ENCODE measurements at regions of chr10 and their contacts with region 1.

Region 1: DNA sequence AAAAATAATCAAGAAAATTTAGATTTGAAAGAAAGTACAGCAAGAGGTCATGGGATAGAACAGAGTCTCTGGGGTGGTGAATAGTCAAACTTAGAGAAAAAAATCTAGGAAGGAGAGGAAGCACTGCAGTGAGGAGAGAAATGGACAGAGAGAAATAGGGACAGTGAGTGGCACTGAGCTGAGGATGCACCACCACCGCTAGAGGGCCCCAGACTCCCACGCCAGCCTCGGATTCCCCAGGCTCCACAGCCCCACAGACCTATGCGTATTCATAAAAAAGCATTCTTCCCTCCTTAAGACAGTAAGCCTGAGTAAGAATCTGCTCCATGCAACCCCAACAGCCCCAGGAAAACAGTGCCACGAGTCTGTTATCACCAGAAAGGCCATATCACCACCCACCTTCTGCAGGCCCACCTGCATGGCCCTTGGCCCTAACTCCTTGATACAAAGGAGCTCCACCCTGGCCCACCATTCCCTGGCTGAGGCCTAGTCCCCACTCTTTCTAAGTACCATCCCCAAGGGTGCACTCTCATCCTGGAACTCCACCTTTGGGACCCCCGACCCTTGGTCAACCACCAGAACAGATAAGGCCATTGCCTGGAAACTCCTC is 91.0 kb downstream of the ALOX5 start:
- DNase-seq: peak; percentile 73 to 86
- ATAC-seq: peak; percentile 92 to 99 (median 99)
- H3K4me3 ChIP-seq: no peak overlapping the region
- H3K4me3 Mint-ChIP-seq: no peak overlapping the region
- H3K27ac ChIP-seq: no peak overlapping the region
- H3K27ac Mint-ChIP-seq: peak overlapping the region in 1 of 2 donors; percentile 47
- H3K4me1 ChIP-seq: peaks cover 15% of the 10 kb centered on the region
- H3K4me1 Mint-ChIP-seq: peaks cover 16% of the 10 kb centered on the region in 2 donors
- H3K27me3 ChIP-seq: no peaks in the 10 kb centered on the region
- H3K27me3 Mint-ChIP-seq: no peaks in the 10 kb centered on the region
- CTCF ChIP-seq: peak; percentile 91

Region 2: GRCh38 chr10:45453639-45454255 is 11.3 kb before region 1 on chr10:
- intact Hi-C with region 1: no loop called
- DNase-seq: no peak
- ATAC-seq: no peak
- H3K4me3 ChIP-seq: no peak overlapping the region
- H3K4me3 Mint-ChIP-seq: no peak overlapping the region
- H3K27ac ChIP-seq: no peak overlapping the region
- H3K27ac Mint-ChIP-seq: no peak overlapping the region
- H3K4me1 ChIP-seq: no peaks in the 10 kb centered on the region
- H3K4me1 Mint-ChIP-seq: peaks cover 0 to 8% of the 10 kb centered on the region in 2 donors
- H3K27me3 ChIP-seq: no peaks in the 10 kb centered on the region
- H3K27me3 Mint-ChIP-seq: no peaks in the 10 kb centered on the region
- CTCF ChIP-seq: no peak

Region 3: GRCh38 chr10:45513551-45513950 is 48.5 kb after region 1 on chr10:
- intact Hi-C with region 1: no loop called
- DNase-seq: no peak
- ATAC-seq: no peak
- H3K4me3 ChIP-seq: no peak overlapping the region
- H3K4me3 Mint-ChIP-seq: no peak overlapping the region
- H3K27ac ChIP-seq: no peak overlapping the region
- H3K27ac Mint-ChIP-seq: no peak overlapping the region
- H3K4me1 ChIP-seq: no peaks in the 10 kb centered on the region
- H3K4me1 Mint-ChIP-seq: peaks cover 30 to 40% of the 10 kb centered on the region in 2 donors
- H3K27me3 ChIP-seq: no peaks in the 10 kb centered on the region
- H3K27me3 Mint-ChIP-seq: no peaks in the 10 kb centered on the region
- CTCF ChIP-seq: no peak

Region 4: DNA sequence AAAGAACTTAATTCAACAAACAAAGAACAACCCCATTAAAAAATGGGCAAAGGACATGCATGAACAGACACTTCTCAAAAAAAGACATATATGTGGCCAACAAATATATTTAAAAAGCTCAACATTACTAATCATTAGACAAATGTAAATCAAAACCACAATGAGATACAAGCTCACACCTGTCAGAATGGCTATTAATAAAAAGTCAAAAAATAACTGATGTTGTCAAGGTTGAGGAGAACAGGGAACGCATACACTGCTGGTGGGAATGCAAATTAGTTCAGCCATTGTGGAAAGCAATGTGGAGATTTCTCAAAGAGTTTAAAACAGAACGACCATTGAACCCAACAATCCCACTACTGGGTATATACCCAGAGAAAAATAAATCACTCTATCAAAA is 188.4 kb after region 1 on chr10:
- intact Hi-C with region 1: no loop called
- DNase-seq: no peak
- ATAC-seq: no peak
- H3K4me3 ChIP-seq: no peak overlapping the region
- H3K4me3 Mint-ChIP-seq: no peak overlapping the region
- H3K27ac ChIP-seq: no peak overlapping the region
- H3K27ac Mint-ChIP-seq: no peak overlapping the region
- H3K4me1 ChIP-seq: no peaks in the 10 kb centered on the region
- H3K4me1 Mint-ChIP-seq: peaks cover 24 to 36% of the 10 kb centered on the region in 2 donors
- H3K27me3 ChIP-seq: no peaks in the 10 kb centered on the region
- H3K27me3 Mint-ChIP-seq: no peaks in the 10 kb centered on the region
- CTCF ChIP-seq: no peak

Region 5: DNA sequence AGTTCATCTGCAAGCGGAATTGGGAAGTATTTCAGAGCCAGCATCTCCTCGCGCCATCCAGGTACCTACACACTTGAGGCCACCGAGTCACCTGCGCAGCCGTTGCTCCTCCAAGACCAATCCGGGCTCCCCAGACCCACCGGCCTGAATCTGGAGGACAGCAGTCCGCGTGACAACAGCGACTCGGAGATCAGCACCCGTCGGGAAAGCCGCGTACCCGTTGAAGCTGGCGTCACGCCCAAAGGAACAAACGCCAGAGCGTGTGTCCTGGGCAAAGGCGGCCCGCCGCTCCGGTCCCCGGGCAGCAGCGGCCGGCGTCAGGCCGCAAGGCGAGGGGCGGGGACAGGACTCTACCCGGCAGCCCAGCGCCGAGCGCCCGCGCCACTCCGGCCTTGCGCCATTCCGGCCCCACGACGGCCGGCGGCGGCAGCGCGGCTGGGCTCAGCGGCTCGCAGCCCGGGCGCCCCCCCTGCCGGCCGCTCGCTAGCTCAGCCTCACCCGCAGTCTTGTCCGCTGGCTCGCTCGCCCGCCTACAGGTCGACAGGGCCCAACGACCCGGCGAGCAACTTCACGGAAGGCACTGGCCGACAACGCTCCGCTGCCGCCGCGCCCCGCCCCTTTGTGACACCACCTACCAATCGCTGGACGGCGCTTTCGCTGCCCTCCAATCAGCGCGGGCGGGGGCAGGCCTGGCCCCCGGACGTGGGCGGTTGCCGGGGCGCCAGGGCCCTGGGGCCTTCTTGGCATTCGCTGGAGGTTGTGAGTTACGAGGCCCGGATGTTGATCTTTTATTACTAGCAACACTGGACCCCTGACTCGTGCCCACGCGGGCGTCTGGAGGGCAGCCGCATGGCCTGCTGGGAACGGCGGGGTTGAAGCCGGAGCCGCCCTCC is 207.4 kb after region 1 on chr10 and contains the start of gene ZFAND4:
- intact Hi-C with region 1: loop called (anchors 1 kb)
- DNase-seq: peak; percentile 92 to 96
- ATAC-seq: peak; percentile 93 to 99 (median 96)
- H3K4me3 ChIP-seq: peak within 1 kb of the TSS; percentile 82
- H3K4me3 Mint-ChIP-seq: peak within 1 kb of the TSS; percentile 92
- H3K27ac ChIP-seq: peak within 1 kb of the TSS; percentile 96
- H3K27ac Mint-ChIP-seq: peak within 1 kb of the TSS; percentile 87 to 92
- H3K4me1 ChIP-seq: peaks cover 17% of the 10 kb centered on the region
- H3K4me1 Mint-ChIP-seq: peaks cover 36 to 40% of the 10 kb centered on the region in 2 donors
- H3K27me3 ChIP-seq: no peaks in the 10 kb centered on the region
- H3K27me3 Mint-ChIP-seq: peaks cover 0 to 3% of the 10 kb centered on the region in 2 donors
- CTCF ChIP-seq: peak; percentile 68
- total RNA-seq, gene ZFAND4: 27.9 to 35.1 (median 32.1) TPM

Region 6: GRCh38 chr10:46028584-46029460 is 563.8 kb after region 1 on chr10:
- intact Hi-C with region 1: loop called (anchors 5 kb)
- DNase-seq: peak in 1 of 2 donors; percentile 76
- ATAC-seq: peak in 2 of 3 donors; percentile 15 to 26
- H3K4me3 ChIP-seq: no peak overlapping the region
- H3K4me3 Mint-ChIP-seq: peak overlapping the region; percentile 96
- H3K27ac ChIP-seq: no peak overlapping the region
- H3K27ac Mint-ChIP-seq: peak overlapping the region; percentile 93 to 99
- H3K4me1 ChIP-seq: peaks cover 17% of the 10 kb centered on the region
- H3K4me1 Mint-ChIP-seq: peaks cover 64 to 70% of the 10 kb centered on the region in 2 donors
- H3K27me3 ChIP-seq: no peaks in the 10 kb centered on the region
- H3K27me3 Mint-ChIP-seq: no peaks in the 10 kb centered on the region
- CTCF ChIP-seq: peak; percentile 69

Measured in natural killer cell (primary cell).